Colonic mucosa (tissue), 4 donors: ENCODE measurements at regions of chr12 and their contacts with region 1.

Region 1: DNA sequence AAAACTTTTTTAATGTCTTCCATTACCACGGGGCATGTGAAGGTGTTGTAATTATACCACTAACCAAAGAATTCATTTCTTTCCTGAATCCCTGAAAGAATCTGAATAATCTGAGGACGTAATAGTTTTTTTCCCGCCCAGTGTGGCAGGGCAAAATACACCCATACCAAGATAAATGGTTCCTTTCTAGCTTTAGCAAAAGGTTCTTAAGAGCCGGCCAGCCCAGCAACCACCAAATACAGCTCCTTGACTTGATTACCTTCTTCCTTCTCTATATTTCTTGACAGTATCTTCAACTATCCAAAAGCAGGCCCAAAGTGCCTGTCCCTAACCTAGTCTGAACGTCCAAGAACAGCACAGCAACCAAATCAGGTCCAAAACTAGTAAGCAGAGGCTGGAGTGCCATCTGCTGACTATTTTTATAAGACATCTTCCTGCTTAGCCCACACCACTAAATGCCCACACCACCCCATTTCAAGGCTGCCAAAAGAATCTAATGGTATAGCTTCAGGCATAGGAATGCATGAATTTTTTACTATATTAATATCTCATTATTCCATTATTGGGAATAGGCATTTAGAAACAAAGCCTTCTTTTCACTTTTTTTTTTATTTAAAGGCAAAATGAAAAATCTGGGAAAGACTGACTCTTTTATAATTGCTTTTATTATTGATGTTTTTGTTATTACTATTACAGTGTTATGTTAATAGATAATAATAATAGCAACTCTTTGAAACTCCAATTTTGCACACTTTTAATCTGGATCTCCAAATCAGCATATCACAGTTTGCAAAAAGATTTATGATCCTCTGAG is 524.4 kb downstream of the MED13L start:
- DNase-seq: peak; percentile 36
- H3K4me3 ChIP-seq: no peak overlapping the region
- H3K27ac ChIP-seq: no peak overlapping the region
- H3K4me1 ChIP-seq: no peaks in the 10 kb centered on the region
- H3K27me3 ChIP-seq: no peaks in the 10 kb centered on the region
- CTCF ChIP-seq: peak; percentile 57

Region 2: GRCh38 chr12:115623764-115624334 is 129.3 kb before region 1 on chr12:
- intact Hi-C with region 1: loop called (anchors 10 kb)
- DNase-seq: no peak
- H3K4me3 ChIP-seq: no peak overlapping the region
- H3K27ac ChIP-seq: no peak overlapping the region
- H3K4me1 ChIP-seq: no peaks in the 10 kb centered on the region
- H3K27me3 ChIP-seq: no peaks in the 10 kb centered on the region
- CTCF ChIP-seq: no peak

Region 3: DNA sequence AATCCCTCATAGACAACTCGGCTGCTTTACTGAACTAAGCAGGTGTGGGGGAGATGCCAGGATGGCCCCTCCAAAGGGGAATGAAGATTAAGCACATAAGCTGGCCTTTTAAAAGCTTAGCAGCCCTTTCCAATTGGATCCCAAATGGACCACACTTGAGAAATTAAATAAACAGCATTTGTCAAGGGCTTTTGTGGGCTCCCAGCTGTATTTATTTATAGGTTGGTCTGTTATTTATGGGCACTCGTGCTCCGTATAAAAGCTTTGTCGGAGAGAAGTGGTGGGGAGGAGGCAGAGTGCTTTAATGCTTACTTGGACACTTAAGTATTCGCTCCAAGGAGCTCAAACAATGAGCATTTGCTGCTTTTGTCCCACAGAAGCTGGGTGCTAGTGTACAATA is 55.8 kb before region 1 on chr12:
- intact Hi-C with region 1: no loop called
- DNase-seq: no peak
- H3K4me3 ChIP-seq: no peak overlapping the region
- H3K27ac ChIP-seq: no peak overlapping the region
- H3K4me1 ChIP-seq: no peaks in the 10 kb centered on the region
- H3K27me3 ChIP-seq: no peaks in the 10 kb centered on the region
- CTCF ChIP-seq: no peak